Ascending aorta (tissue), 2 donors: ENCODE measurements at regions of chr20 and their contacts with region 1.

Region 1: DNA sequence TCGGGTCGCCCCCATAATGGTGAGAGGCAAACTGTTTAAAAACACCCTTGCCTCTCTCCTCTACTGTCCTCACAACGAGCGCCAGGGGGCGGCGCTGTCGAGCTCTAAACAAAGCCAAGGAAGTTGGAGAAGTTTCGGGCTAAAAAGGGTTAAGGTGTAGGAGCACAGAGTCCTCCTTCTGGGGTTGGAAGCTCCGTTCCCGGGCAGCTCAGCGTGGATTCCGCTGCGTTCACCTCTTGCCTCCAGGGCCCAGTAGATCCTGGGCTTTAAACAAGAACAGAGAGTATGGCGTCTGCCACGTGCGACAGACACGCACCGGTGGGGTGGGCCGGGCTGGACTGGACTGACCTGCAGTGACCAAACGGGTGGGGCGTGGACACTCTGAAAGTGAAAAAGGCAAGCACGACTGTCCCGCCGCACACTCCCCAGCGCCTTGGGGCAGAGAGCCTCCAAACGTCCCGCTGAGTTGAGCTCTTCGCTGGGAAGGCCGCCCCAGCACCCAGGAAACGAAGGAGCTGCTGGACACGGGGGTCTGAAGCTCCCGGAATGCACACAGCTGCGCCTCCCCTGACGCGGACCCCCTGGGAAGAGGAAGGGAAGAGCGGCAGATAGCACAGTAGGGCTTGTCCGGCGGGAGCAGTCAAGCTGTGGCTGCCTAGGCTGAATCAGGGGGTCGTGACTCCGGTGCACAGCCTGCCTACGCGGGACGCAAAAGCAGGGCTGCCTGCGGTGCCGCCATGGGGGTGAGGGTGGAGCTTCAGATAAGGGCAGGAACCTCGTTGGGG is 1.6 kb upstream of the THBD start:
- DNase-seq: peak; percentile 49 to 95
- H3K4me3 ChIP-seq: peak overlapping the region; percentile 67 to 78
- H3K27ac ChIP-seq: peak overlapping the region; percentile 91 to 93
- H3K4me1 ChIP-seq: peaks cover 9 to 20% of the 10 kb centered on the region in 2 donors
- H3K27me3 ChIP-seq: no peaks in the 10 kb centered on the region
- CTCF ChIP-seq: peak; percentile 76 to 86 (median 85)

Region 2: GRCh38 chr20:22403632-22404361 is 647.2 kb before region 1 on chr20:
- intact Hi-C with region 1: no loop called
- DNase-seq: no peak
- H3K4me3 ChIP-seq: peak overlapping the region; percentile 29 to 55
- H3K27ac ChIP-seq: peak overlapping the region; percentile 40 to 46
- H3K4me1 ChIP-seq: no peaks in the 10 kb centered on the region
- H3K27me3 ChIP-seq: no peaks in the 10 kb centered on the region
- CTCF ChIP-seq: no peak

Region 3: GRCh38 chr20:22691369-22692118 is 359.5 kb before region 1 on chr20:
- intact Hi-C with region 1: loop called (anchors 2 kb)
- DNase-seq: peak in 1 of 2 donors; percentile 88
- H3K4me3 ChIP-seq: peak overlapping the region in 1 of 2 donors; percentile 28
- H3K27ac ChIP-seq: no peak overlapping the region
- H3K4me1 ChIP-seq: peaks cover 0 to 6% of the 10 kb centered on the region in 2 donors
- H3K27me3 ChIP-seq: no peaks in the 10 kb centered on the region
- CTCF ChIP-seq: peak; percentile 82 to 91 (median 85)

Region 4: DNA sequence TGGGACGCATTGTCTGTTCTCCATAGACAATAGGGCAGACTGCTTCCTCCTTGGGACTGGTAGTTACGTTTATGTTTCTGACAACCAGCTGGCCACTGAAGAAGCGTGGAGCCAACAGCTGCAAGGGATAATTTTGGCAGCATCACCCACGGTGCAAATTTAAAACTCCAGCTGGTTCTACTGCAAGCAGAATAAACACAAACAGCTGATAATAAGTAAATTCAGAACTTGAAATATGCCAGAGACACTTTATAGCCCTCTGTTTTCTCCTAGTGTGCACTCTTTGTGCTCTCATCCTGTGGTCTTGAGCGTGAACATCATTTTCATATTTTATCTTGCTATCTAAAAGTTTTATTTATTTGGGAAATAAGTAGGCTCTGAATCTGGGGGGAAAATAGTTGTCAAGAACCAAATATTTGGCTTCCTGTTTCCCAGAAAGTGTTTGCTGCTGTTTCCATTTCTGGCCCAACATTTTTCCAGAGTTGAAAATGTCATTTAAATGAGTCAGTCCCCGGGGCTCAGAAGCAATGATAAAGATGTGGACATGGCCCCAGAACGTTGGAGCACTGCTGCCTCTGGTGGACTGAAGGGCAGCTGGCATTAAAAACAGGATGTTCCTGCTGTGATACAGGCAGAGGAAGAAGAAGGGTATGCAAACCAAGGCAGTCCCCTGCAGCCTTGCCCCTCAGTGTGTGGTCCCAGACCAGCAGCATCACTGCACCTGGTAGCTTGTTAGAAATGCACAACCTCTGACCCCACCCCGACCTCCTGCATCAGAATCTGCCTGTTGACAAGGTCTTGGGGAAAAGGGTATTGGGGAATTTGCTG is 10.9 kb after region 1 on chr20:
- intact Hi-C with region 1: loop called (anchors 1 kb)
- DNase-seq: peak in 1 of 2 donors; percentile 86
- H3K4me3 ChIP-seq: peak overlapping the region; percentile 13 to 27
- H3K27ac ChIP-seq: peak overlapping the region; percentile 85 to 96
- H3K4me1 ChIP-seq: peaks cover 15 to 39% of the 10 kb centered on the region in 2 donors
- H3K27me3 ChIP-seq: no peaks in the 10 kb centered on the region
- CTCF ChIP-seq: peak; percentile 49 to 73 (median 66)

Region 5: DNA sequence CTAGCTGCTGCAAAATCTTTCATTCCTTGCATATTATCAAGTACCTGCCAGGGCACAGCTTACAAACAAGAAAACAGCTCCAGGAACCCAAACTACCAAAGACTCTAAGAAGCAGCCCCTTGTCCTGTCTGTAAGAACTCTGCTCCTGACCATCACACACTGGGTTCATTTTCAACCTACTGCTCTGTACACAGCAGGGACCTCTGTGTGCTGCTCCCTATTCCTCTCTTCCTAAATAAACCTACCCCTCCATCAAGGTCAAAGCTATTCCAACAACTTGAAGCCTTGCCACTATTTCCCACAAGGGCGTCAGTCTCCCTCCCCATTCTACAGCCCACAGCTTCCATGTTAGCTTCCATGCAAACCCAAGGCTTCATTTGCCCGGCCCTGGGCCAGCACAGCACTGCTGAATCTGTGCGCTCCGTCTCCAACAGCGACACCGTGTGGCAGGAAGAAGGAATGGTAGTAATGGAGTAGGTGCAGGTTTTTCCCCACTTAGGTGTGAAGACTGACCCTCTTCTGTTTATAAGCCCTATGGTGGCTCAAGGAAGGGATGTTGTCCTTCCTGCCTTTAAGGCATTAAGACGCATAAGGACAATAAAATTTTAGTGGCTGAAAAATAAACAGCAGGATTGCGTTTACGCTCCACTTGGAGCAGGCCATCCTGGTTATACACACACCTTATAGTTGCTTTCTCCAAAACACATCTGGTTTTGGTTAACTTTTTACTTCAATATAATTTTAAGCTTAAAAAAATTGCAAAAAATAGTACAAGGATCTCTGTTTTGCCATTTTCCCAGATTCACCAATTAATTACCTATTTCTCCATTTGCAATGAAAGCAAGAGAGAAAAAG is 184.4 kb after region 1 on chr20:
- intact Hi-C with region 1: loop called (anchors 1 kb)
- DNase-seq: peak in 1 of 2 donors; percentile 84
- H3K4me3 ChIP-seq: no peak overlapping the region
- H3K27ac ChIP-seq: no peak overlapping the region
- H3K4me1 ChIP-seq: no peaks in the 10 kb centered on the region
- H3K27me3 ChIP-seq: no peaks in the 10 kb centered on the region
- CTCF ChIP-seq: peak; percentile 67 to 86 (median 84)

Region 6: DNA sequence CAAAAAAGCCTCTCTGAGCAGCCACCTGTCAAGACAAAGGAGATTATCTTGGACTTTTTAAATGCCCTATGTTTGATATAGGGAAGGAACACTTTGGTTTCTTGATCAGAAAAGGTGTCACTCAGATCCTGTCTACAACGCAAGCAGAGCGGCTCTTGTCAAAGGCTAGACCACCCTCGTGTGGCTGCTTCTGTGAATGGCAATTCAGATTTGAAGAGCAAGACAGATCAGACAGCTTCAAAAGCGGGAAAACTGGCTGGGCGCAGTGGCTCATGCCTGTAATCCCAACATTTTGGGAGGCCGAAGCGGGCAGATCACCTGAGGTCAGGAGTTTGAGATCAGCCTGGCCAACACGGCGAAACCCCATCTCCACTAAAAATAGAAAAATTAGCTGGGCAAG is 289.5 kb after region 1 on chr20:
- intact Hi-C with region 1: loop called (anchors 2 kb)
- DNase-seq: peak in 1 of 2 donors; percentile 88
- H3K4me3 ChIP-seq: no peak overlapping the region
- H3K27ac ChIP-seq: no peak overlapping the region
- H3K4me1 ChIP-seq: no peaks in the 10 kb centered on the region
- H3K27me3 ChIP-seq: no peaks in the 10 kb centered on the region
- CTCF ChIP-seq: peak; percentile 66 to 79 (median 76)

Region 7: DNA sequence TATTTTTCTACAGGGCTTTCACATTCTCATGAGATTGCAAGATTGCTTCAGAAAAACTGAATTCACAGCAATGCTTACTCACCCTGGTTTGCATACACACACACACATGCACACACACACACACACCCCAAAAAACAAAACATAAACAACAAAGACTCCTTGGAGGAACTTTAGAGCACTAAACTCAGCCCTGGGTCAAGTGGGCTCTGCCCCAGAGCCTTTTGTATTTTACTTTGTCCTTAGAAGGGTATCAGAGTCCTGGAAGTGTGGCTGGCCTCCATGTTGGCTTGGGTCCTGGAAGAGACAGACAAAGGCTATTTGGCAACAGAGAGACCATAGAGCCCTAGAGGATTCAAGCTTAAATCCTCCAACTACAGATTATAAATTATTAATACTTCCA is 562.6 kb after region 1 on chr20:
- intact Hi-C with region 1: loop called (anchors 5 kb)
- DNase-seq: no peak
- H3K4me3 ChIP-seq: no peak overlapping the region
- H3K27ac ChIP-seq: peak overlapping the region; percentile 37 to 39
- H3K4me1 ChIP-seq: no peaks in the 10 kb centered on the region
- H3K27me3 ChIP-seq: no peaks in the 10 kb centered on the region
- CTCF ChIP-seq: no peak